Gastrocnemius medialis (tissue), 4 donors: ENCODE measurements at regions of chr11 and their contacts with region 1.

Region 1: DNA sequence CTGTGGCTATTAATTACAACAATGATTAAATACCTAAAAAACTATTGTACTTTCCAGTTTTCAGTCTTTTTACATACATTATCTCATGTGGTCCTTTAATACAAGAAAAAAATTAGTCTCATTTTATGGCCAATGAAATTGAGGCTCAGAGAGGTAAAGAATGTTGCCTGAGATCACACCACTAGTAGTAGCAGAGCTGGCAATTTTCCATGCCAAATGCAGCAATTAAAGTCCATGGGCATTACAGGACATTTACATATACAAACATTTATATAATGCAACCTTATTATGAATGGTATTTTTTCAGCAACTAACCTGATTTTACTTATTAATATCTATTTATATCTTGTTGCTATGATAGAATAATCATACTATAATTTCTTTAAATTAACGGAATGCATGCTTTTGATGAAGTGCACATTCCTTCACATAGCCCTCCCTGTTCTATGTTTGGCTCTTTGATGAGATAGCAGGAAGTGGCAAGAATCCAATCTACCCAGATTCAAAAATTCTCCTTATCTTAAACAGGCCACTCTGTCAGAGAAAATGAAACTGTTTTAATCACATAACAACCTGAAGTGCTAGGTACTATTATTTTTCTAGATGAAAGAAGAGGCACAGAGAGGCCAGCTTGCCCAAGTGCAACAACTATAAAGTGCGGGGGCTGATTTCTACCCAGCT is 120.9 kb upstream of the LDLRAD3 start:
- DNase-seq: no peak
- ATAC-seq: no peak
- H3K4me3 ChIP-seq: no peak overlapping the region
- H3K27ac ChIP-seq: no peak overlapping the region
- H3K4me1 ChIP-seq: peaks cover 11 to 14% of the 10 kb centered on the region in 2 donors
- H3K27me3 ChIP-seq: no peaks in the 10 kb centered on the region
- CTCF ChIP-seq: no peak
- POLR2A ChIP-seq: no peak

Region 2: DNA sequence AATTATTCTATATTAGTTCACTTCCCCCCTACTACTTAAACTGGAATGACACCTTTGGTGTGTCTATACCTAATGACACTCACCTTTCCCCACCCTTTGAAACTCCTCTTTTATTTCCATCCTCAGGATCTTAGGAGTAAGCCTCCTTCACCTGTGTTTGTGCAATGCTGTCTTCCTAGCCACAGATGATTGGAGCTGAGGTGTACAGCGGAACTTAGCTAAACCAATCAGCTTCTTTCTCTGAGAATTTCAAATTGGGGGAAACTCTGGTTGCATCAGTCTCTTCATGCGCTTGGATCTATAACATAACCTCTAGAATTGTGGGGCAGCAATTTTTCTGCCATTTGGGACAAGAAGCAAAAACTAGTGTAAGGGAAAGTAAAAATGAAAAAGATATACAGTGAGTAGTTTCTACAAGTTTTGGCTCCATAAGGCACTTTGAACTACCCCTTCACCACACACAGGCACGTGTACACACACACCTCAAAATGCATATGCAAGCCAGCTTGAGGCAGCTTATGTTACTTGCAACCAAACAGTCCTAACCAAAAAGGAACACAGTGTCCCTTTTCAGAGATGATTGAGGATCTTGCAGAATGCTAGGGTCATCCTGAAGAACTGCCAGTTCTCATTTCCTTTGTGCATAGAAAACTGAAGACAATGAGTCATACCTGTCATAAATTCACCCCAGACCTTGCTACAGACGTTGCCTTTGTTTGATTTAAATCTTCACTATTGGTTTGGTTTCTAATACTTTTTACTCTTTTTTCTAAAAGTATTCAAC is 84.9 kb after region 1 on chr11:
- in situ Hi-C with region 1: no loop called
- intact Hi-C with region 1: loop called (anchors 10 kb)
- DNase-seq: peak; percentile 77 to 78
- ATAC-seq: peak; percentile 97
- H3K4me3 ChIP-seq: no peak overlapping the region
- H3K27ac ChIP-seq: peak overlapping the region; percentile 58 to 84 (median 69)
- H3K4me1 ChIP-seq: peaks cover 12 to 36% of the 10 kb centered on the region in 2 donors
- H3K27me3 ChIP-seq: no peaks in the 10 kb centered on the region
- CTCF ChIP-seq: no peak
- POLR2A ChIP-seq: no peak

Region 3: GRCh38 chr11:35943713-35944655 is 121.0 kb after region 1 on chr11 and contains the start of gene LDLRAD3:
- in situ Hi-C with region 1: no loop called
- intact Hi-C with region 1: loop called (anchors 10 kb)
- DNase-seq: peak; percentile 74 to 75
- ATAC-seq: peak; percentile 84
- H3K4me3 ChIP-seq: peak within 1 kb of the TSS; percentile 61 to 73 (median 66)
- H3K27ac ChIP-seq: peak within 1 kb of the TSS; percentile 71 to 85 (median 80)
- H3K4me1 ChIP-seq: peaks cover 15 to 21% of the 10 kb centered on the region in 2 donors
- H3K27me3 ChIP-seq: no peaks in the 10 kb centered on the region
- CTCF ChIP-seq: no peak
- POLR2A ChIP-seq: peak; percentile 59 to 67
- total RNA-seq, gene LDLRAD3: 6.1 to 12.8 (median 11.8) TPM

Region 4: GRCh38 chr11:36010010-36010740 is 187.2 kb after region 1 on chr11:
- in situ Hi-C with region 1: no loop called
- intact Hi-C with region 1: loop called (anchors 10 kb)
- DNase-seq: no peak
- ATAC-seq: no peak
- H3K4me3 ChIP-seq: no peak overlapping the region
- H3K27ac ChIP-seq: no peak overlapping the region
- H3K4me1 ChIP-seq: peaks cover 23 to 24% of the 10 kb centered on the region in 2 donors
- H3K27me3 ChIP-seq: no peaks in the 10 kb centered on the region
- CTCF ChIP-seq: no peak
- POLR2A ChIP-seq: no peak

Region 5: DNA sequence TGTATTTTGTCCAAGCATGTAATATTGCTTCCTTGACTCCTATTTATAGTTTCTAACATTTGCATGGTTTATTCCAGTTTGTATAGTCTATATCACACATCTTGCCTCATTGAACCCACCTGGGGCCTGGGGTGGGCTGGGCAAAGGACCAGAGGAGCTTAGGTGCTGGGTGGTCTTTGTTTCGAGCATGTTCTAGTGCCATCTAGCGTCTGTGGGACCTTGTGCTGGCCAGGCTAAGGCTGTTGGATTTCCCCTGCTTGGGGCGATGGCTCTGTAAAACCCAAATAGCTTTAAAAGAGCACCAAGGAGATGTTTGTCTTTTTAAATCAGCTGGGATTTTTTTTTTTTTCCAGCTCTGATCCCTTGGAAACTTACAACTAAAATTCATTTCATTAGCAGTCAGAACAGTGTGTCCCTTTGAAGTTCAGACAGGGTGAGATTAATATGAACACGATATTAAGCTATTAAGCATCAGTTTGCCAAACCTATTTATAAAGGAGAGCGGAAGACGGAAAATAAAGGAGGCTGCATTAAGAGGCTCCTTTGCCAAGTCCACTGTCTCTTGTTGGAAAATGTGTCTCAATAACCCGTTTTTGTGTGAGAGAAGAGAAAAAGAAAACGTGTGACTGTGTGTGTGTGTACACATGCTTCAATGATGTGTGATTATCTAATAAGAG is 308.9 kb after region 1 on chr11:
- in situ Hi-C with region 1: loop called in 1 of 4 experiments (anchors 10 kb)
- intact Hi-C with region 1: loop called (anchors 1 kb)
- DNase-seq: peak; percentile 31 to 35
- ATAC-seq: peak; percentile 69 to 75
- H3K4me3 ChIP-seq: no peak overlapping the region
- H3K27ac ChIP-seq: no peak overlapping the region
- H3K4me1 ChIP-seq: peaks cover 0 to 14% of the 10 kb centered on the region in 2 donors
- H3K27me3 ChIP-seq: no peaks in the 10 kb centered on the region
- CTCF ChIP-seq: peak; percentile 35 to 78 (median 61)
- POLR2A ChIP-seq: no peak

Region 6: DNA sequence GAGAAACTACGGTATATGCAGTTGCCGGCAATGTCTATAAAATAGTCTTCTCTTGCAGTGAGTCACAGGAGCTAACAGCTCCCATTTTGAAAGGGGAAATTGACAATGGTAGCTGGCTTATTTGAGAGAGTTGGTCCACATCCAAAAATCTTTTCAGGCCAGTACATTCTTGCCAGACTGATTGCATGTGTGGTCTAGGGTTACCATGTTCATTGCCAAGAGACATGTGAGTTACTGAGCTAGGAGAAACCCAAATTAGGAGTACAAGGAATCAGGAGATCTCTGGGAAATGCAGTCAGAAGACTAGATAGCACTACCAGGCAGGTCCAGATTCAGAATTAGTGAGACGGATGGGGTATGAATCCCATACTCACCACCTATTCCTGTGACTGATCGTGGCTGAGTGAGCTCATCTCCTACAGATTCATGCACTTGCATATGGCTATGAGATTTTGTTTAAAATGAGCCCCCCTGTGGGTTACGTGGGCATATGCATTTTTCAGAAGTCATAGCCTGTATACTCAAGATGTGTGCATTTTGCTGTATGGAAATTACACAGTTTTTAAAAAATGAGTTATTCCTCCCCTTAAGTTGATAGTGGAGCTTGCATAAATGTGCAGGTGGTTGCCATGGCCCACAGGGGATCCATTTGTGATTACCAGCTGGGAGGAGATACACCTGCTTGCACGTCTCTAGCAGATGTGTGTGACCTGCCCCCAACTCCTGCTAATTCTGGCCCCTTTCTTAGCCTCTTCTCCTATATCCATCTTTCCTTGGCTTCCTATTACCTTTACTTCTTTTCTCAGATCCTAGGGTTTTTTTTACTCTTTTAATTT is 363.6 kb after region 1 on chr11:
- in situ Hi-C with region 1: no loop called
- intact Hi-C with region 1: loop called (anchors 5 kb)
- DNase-seq: peak; percentile 58 to 71
- ATAC-seq: peak; percentile 96
- H3K4me3 ChIP-seq: no peak overlapping the region
- H3K27ac ChIP-seq: peak overlapping the region; percentile 68 to 84 (median 76)
- H3K4me1 ChIP-seq: peaks cover 23 to 24% of the 10 kb centered on the region in 2 donors
- H3K27me3 ChIP-seq: no peaks in the 10 kb centered on the region
- CTCF ChIP-seq: no peak
- POLR2A ChIP-seq: no peak

Region 7: GRCh38 chr11:36258730-36259360 is 435.9 kb after region 1 on chr11:
- in situ Hi-C with region 1: loop called (anchors 25 kb)
- intact Hi-C with region 1: loop called (anchors 1 kb)
- DNase-seq: peak; percentile 33 to 37
- ATAC-seq: peak; percentile 60 to 84
- H3K4me3 ChIP-seq: no peak overlapping the region
- H3K27ac ChIP-seq: no peak overlapping the region
- H3K4me1 ChIP-seq: no peaks in the 10 kb centered on the region
- H3K27me3 ChIP-seq: no peaks in the 10 kb centered on the region
- CTCF ChIP-seq: peak; percentile 27 to 60 (median 52)
- POLR2A ChIP-seq: no peak